HAP-1 (cell line): ENCODE measurements at regions of chr4 and their contacts with region 1.

Region 1: GRCh38 chr4:153573881-153574802 is 108.0 kb downstream of the TMEM131L start:
- DNase-seq: peak; percentile 33 to 58
- H3K4me3 ChIP-seq: no peak overlapping the region
- H3K4me1 ChIP-seq: no peaks in the 10 kb centered on the region
- H3K27me3 ChIP-seq: no peaks in the 10 kb centered on the region

Region 2: GRCh38 chr4:153142700-153143438 is 431.3 kb before region 1 on chr4:
- in situ Hi-C with region 1: loop called (anchors 10 kb)
- DNase-seq: peak; percentile 82 to 86
- H3K4me3 ChIP-seq: no peak overlapping the region
- H3K4me1 ChIP-seq: peaks cover 41% of the 10 kb centered on the region
- H3K27me3 ChIP-seq: no peaks in the 10 kb centered on the region

Region 3: DNA sequence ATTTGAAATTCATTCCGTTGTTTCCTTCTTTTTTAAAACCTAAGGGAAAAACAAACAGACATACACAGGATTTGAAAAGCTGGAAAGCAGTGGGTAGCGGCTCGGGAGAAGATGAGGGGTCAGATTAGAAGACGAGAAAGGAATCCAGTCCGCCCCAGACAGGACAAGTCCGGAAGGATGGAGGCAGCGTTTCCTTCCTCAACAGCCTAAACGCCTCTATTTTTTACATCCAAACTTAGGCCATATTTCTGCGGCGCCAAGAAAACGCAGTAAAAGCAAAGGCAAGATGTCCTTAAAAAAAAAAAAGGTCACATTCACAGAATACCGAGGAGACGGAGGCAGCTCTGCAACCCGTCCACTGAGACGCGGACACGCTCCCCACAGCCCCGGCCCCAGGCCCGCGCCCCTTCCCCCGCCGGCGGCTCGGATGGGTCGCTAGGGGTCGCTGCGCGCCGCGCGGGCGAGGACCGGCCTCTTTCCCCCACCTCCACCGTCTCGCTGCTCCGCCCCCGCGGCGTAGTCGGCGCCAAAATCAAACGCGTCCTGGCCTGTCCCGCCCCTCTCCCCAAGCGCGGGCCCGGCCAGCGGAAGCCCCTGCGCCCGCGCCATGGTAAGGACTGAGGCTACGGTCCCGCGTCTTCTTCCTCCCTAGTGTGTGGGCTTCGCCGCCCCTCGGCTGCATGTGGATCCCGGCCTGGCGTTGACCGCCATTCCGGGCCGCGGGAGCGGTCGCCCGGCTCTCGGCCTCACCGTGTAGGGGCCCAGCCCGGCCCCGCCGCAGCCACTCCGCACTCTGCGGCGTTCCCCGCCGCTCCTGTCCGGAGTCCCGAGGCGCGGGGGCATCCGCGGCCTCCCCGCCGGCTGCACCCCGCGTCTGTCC is 229.8 kb before region 1 on chr4 and contains the start of gene MND1:
- in situ Hi-C with region 1: loop called (anchors 10 kb)
- DNase-seq: peak; percentile 89 to 96
- H3K4me3 ChIP-seq: peak within 1 kb of the TSS; percentile 71
- H3K4me1 ChIP-seq: peaks cover 29% of the 10 kb centered on the region
- H3K27me3 ChIP-seq: no peaks in the 10 kb centered on the region

Region 4: GRCh38 chr4:153432968-153433753 is 141.0 kb before region 1 on chr4:
- in situ Hi-C with region 1: loop called (anchors 10 kb)
- DNase-seq: peak; percentile 32 to 67
- H3K4me3 ChIP-seq: no peak overlapping the region
- H3K4me1 ChIP-seq: peaks cover 3% of the 10 kb centered on the region; the same call in 1 of the 2 replicates
- H3K27me3 ChIP-seq: no peaks in the 10 kb centered on the region

Region 5: DNA sequence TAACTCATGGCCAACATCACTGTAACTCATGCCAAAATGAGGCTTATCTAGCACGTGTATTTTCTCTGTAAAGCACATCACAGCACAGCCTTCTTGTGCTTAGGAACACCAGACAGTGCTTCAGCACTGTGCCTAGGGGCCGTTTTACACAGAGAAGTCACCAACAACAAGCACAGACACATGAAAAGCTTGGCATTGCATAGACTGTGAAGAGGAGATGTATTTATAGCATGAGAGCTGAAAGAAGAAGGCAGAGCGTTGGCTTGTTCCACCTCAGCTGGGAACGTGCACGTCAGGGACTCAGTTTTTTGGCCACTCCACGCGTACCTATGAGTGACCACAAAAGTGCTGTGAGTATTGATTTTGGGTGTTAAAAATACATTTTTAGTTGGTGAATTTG is 331.1 kb after region 1 on chr4:
- in situ Hi-C with region 1: no loop called
- DNase-seq: no peak
- H3K4me3 ChIP-seq: no peak overlapping the region
- H3K4me1 ChIP-seq: no peaks in the 10 kb centered on the region
- H3K27me3 ChIP-seq: no peaks in the 10 kb centered on the region; the same call in 1 of the 2 replicates